Activated CD4-positive, alpha-beta memory T cell treated with anti-CD3 and anti-CD28 coated beads, Interleukin-2, amount 10 ng/mL, durations not matched to agents 7 days and 5 days (primary cell): ENCODE measurements at regions of chr2 and their contacts with region 1.

Region 1: GRCh38 chr2:105797298-105797819 is 52.6 kb downstream of the NCK2 start:
- DNase-seq: peak; percentile 72
- H3K4me3 Mint-ChIP-seq: peak overlapping the region; percentile 66
- H3K27ac Mint-ChIP-seq: peak overlapping the region; percentile 98
- H3K4me1 Mint-ChIP-seq: peaks cover 93% of the 10 kb centered on the region
- H3K27me3 Mint-ChIP-seq: no peaks in the 10 kb centered on the region

Region 2: DNA sequence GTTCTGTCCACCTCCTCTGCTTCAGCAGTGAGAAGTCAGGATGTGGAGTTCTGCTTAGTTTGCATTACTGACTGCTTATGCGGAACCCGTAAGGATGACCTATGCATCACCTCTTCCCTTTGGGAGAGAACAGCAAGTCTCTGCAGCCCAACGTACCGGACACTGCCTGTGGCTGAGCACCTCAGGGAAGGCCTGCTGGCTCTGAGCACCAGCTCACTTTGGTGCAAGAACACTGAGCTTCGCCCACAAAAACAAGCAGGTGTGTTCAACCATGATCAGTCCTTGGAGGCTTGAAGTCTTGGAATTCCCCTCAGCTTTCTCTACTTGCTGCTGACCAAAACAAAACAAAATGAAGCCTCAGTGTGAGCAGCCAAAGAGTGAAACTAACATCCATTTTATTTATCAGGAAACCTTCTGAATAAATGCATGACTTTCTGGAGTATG is 105.4 kb before region 1 on chr2:
- CTCF ChIA-PET with region 1: no interaction called
- POLR2A ChIA-PET with region 1: no interaction called
- DNase-seq: no peak
- H3K4me3 Mint-ChIP-seq: no peak overlapping the region
- H3K27ac Mint-ChIP-seq: no peak overlapping the region
- H3K4me1 Mint-ChIP-seq: no peaks in the 10 kb centered on the region
- H3K27me3 Mint-ChIP-seq: peaks cover 3% of the 10 kb centered on the region

Region 3: GRCh38 chr2:105744091-105744908 is 53.1 kb before region 1 on chr2:
- CTCF ChIA-PET with region 1: no interaction called
- POLR2A ChIA-PET with region 1: interaction called, 106 read pairs
- DNase-seq: peak; percentile 68
- H3K4me3 Mint-ChIP-seq: peak overlapping the region; percentile 77
- H3K27ac Mint-ChIP-seq: peak overlapping the region; percentile 83
- H3K4me1 Mint-ChIP-seq: peaks cover 74% of the 10 kb centered on the region
- H3K27me3 Mint-ChIP-seq: no peaks in the 10 kb centered on the region

Region 4: GRCh38 chr2:105749583-105750400 is 47.6 kb before region 1 on chr2:
- CTCF ChIA-PET with region 1: no interaction called
- POLR2A ChIA-PET with region 1: interaction called, 106 read pairs
- DNase-seq: peak; percentile 57
- H3K4me3 Mint-ChIP-seq: peak overlapping the region; percentile 95
- H3K27ac Mint-ChIP-seq: peak overlapping the region; percentile 90
- H3K4me1 Mint-ChIP-seq: peaks cover 82% of the 10 kb centered on the region
- H3K27me3 Mint-ChIP-seq: no peaks in the 10 kb centered on the region

Region 5: DNA sequence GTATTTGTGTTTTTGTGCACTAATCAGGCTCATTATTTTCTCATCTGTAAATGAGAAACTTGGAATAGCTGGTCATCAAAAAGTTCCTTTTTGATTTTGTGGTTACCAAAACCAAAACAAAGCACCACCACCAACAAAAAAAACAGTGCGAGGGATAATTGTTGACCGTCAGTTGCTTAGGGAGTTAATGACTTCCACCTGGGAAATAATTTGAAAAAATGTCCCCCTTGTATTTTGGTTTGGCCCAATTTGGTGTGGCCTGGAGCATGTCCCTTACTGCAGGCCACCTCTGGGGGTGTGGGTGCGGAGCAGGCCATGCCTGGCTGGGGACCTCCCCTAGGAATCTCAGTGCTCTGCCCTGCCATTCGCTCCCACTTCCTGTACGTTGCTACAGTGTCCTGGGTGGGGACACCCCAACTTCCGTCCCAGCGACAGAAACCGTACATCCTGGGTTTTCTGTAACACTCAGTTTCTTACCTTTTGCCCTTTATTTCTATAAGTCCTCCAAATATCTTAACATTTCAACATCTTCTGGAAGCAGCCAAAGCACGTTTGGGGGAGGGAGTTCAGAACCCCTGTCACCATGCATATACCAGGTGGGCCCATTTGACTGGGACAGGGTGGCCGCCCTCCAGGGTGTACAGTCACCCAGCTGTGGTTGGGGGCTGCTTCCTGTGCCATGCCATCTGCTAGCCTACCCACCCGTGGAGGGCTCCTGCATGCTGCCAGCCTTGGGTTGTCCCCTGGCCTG is 21.4 kb before region 1 on chr2:
- CTCF ChIA-PET with region 1: interaction called, 6 read pairs
- POLR2A ChIA-PET with region 1: interaction called, 40 read pairs
- DNase-seq: peak; percentile 50
- H3K4me3 Mint-ChIP-seq: peak overlapping the region; percentile 69
- H3K27ac Mint-ChIP-seq: peak overlapping the region; percentile 92
- H3K4me1 Mint-ChIP-seq: peaks cover 92% of the 10 kb centered on the region
- H3K27me3 Mint-ChIP-seq: no peaks in the 10 kb centered on the region

Region 6: GRCh38 chr2:105782123-105782522 is 15.2 kb before region 1 on chr2:
- CTCF ChIA-PET with region 1: interaction called, 46 read pairs
- POLR2A ChIA-PET with region 1: interaction called, 105 read pairs
- DNase-seq: no peak
- H3K4me3 Mint-ChIP-seq: no peak overlapping the region
- H3K27ac Mint-ChIP-seq: peak overlapping the region; percentile 58
- H3K4me1 Mint-ChIP-seq: peaks cover 92% of the 10 kb centered on the region
- H3K27me3 Mint-ChIP-seq: no peaks in the 10 kb centered on the region

Region 7: DNA sequence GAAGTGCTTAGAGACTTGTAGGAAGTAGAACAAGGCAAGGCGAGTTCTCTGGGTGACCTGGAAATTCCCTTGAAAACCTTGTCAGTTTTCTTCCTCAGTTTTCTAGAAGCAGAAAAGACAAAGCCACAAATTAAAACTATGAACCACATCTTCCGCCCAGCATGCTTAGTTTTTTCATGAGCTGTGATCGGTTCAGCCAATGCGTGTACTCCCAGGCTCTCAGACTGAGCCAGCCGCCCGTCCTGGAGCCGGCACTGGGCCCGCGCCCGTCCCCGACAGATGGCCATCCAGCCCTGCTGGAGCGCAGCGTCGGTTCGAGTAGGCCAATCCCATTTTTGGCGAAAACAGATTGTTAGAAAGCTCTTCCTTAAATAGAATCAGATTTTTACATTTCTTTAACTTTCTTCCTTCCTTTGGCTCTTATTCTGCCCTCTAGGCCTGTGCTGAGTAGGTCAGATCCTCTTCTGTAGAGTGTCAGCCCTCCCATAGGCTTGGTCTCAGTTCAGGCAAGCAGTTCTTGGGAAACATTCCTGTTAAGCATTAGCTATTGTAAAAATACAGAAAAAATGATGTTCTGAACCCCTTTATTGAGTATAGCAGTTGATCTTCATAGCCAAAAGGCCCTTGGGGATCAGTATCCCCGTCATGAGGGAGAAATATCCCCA is 59.8 kb after region 1 on chr2:
- CTCF ChIA-PET with region 1: interaction called, 5 read pairs
- POLR2A ChIA-PET with region 1: interaction called, 14 read pairs
- DNase-seq: peak; percentile 50
- H3K4me3 Mint-ChIP-seq: peak overlapping the region; percentile 73
- H3K27ac Mint-ChIP-seq: peak overlapping the region; percentile 90
- H3K4me1 Mint-ChIP-seq: peaks cover 80% of the 10 kb centered on the region
- H3K27me3 Mint-ChIP-seq: no peaks in the 10 kb centered on the region